Activated CD4-positive, alpha-beta memory T cell treated with anti-CD3 and anti-CD28 coated beads, Interleukin-2, amount 10 ng/mL, durations not matched to agents 7 days and 5 days (primary cell): ENCODE measurements at regions of chr11 and their contacts with region 1.

Region 1: DNA sequence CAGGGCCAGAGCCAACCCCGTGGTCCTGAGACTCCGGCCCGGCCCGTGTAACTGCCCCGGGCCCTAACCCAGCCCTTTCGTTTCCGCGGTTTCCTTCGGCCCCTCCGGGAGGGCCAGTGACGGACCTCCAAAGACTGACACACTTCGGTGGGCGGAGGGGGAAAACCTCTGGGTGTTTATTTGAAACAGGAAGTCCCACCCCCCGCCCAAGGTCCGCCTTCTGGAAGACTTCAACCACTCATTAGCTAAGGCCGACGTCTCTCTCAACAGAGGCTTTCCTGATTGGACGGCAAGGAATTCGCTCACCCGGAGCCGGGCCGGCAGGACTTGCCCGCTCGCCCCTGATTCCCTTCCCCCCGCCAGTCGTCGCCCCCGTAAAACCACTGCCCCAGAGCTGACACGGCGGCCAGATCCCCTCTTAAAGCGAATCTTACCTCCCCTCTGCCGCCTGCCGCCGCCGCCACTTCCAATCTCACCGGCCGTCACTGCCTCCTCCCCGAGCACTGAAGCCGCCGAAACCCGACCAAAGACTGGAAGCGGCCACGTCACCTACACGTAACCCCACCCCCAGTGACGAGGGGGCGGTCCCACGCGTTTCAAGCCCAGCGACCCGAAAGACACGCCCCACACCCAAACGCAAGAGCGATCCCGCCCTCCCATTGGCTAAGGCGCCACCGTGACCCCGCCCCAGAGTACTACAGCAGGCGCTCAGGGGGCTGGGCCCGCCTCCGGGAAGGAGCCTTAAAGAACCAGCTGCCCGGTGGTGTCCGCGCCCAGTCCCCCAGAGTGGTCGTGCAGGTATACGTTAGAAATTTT is at the start of gene STX5:
- DNase-seq: peak; percentile 100
- H3K4me3 Mint-ChIP-seq: peak within 1 kb of the TSS; percentile 84
- H3K27ac Mint-ChIP-seq: peak within 1 kb of the TSS; percentile 91
- H3K4me1 Mint-ChIP-seq: peaks cover 33% of the 10 kb centered on the region
- H3K27me3 Mint-ChIP-seq: no peaks in the 10 kb centered on the region
- total RNA-seq, gene STX5: 40.6 to 41.6 TPM

Region 2: GRCh38 chr11:62816557-62816956 is 15.2 kb before region 1 on chr11:
- CTCF ChIA-PET with region 1: interaction called, 4 read pairs
- POLR2A ChIA-PET with region 1: interaction called, 14 read pairs
- DNase-seq: no peak
- H3K4me3 Mint-ChIP-seq: no peak overlapping the region
- H3K27ac Mint-ChIP-seq: no peak overlapping the region
- H3K4me1 Mint-ChIP-seq: peaks cover 6% of the 10 kb centered on the region
- H3K27me3 Mint-ChIP-seq: no peaks in the 10 kb centered on the region

Region 3: DNA sequence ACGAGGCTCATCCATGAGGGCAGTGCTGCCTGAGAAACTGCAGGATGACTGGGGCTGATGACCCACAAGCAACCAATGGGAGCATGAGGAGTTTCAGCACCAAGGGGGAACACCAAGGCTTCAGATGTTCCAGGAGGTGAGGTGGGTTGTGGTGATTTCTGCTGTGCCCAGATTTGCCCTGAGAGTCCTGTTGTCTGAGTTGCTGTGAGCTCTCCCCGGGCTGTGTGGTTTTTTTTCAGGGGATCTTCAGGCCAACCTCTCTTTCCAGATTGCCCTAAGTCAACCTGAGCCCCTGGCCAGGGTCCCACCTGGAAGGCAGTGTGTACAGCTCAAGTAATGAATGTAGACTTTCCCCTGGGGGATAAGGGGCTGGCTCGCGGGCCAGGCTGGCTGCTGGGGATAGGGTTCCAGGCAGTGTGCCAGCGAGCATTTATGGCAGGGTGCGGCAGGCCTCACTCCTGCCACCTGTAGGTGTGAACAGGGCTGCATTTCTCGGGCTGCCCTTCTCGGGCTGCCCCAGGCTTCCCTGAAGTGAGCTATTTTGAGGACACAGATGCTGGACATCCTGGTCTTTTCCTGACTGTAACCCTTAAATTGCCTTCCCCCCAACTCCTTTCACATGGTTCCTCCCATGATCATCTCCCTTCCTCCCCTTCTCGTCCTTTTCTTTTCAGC is 143.3 kb after region 1 on chr11:
- CTCF ChIA-PET with region 1: no interaction called
- POLR2A ChIA-PET with region 1: no interaction called
- DNase-seq: no peak
- H3K4me3 Mint-ChIP-seq: no peak overlapping the region
- H3K27ac Mint-ChIP-seq: no peak overlapping the region
- H3K4me1 Mint-ChIP-seq: no peaks in the 10 kb centered on the region
- H3K27me3 Mint-ChIP-seq: peaks cover 18% of the 10 kb centered on the region